SK-N-SH (cell line): ENCODE measurements at regions of chr1 and their contacts with region 1.

Region 1: GRCh38 chr1:199123615-199124014 is 484.8 kb downstream of the PTPRC start:
- DNase-seq: no peak
- H3K4me3 ChIP-seq: no peak overlapping the region
- H3K27ac ChIP-seq: peak overlapping the region in 1 of 2 experiments; percentile 90; a peak in 2 of 4 replicates
- H3K4me1 ChIP-seq: peaks cover 0 to 23% of the 10 kb centered on the region in 2 experiments; a peak in 2 of 4 replicates
- H3K27me3 ChIP-seq: no peaks in the 10 kb centered on the region
- CTCF ChIP-seq: no peak
- EP300 ChIP-seq: peak in 1 of 2 experiments; percentile 34; a peak in 1 of 4 replicates
- RAD21 ChIP-seq: no peak

Region 2: DNA sequence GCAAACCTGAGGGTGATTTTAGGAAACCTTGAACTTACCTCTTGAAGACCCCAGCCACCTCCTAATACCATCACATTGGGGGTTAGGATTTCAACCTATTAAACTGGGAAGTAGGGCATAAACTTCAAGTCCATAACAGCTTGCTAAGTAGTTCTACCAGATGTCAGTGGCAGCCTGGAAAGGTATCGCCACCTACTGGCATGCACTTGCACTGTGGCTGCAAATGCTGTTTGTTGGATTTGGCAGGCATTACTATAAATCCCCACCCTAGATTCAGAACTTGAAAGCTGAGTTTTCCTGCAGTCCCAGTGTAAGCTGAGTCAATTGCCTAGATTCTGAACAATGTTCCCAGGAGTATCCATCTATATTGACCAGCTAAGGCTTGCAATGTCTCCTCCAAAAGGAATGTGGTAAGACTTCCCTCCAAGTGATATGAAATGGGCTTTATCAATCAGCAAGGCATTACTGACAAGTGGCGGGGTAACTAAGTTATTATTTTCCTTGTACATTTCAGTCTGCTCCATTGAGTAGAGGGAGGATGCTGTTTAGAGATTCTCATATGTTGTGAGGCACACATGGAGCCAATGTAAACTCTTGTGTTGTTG is 10.2 kb before region 1 on chr1:
- CTCF ChIA-PET with region 1: interaction called, 13 read pairs
- POLR2A ChIA-PET with region 1: no interaction called
- DNase-seq: peak; percentile 4
- H3K4me3 ChIP-seq: no peak overlapping the region
- H3K27ac ChIP-seq: no peak overlapping the region
- H3K4me1 ChIP-seq: no peaks in the 10 kb centered on the region
- H3K27me3 ChIP-seq: no peaks in the 10 kb centered on the region
- CTCF ChIP-seq: peak; percentile 72
- EP300 ChIP-seq: no peak
- RAD21 ChIP-seq: peak; percentile 84

Region 3: GRCh38 chr1:199182186-199182843 is 58.7 kb after region 1 on chr1:
- CTCF ChIA-PET with region 1: no interaction called
- POLR2A ChIA-PET with region 1: no interaction called
- DNase-seq: no peak
- H3K4me3 ChIP-seq: no peak overlapping the region
- H3K27ac ChIP-seq: no peak overlapping the region
- H3K4me1 ChIP-seq: no peaks in the 10 kb centered on the region
- H3K27me3 ChIP-seq: no peaks in the 10 kb centered on the region
- CTCF ChIP-seq: no peak
- EP300 ChIP-seq: no peak
- RAD21 ChIP-seq: no peak